Activated CD4-positive, alpha-beta T cell treated with anti-CD3 and anti-CD28 coated beads for 36 hours (primary cell): ENCODE measurements at regions of chr11 and their contacts with region 1.

Region 1: GRCh38 chr11:10770626-10771254 is 19.7 kb downstream of the CTR9 start:
- DNase-seq: peak; percentile 55
- ATAC-seq: no peak
- H3K4me3 Mint-ChIP-seq: no peak overlapping the region
- H3K27ac Mint-ChIP-seq: no peak overlapping the region
- H3K4me1 Mint-ChIP-seq: no peaks in the 10 kb centered on the region
- H3K27me3 Mint-ChIP-seq: no peaks in the 10 kb centered on the region

Region 2: GRCh38 chr11:11022125-11022730 is 251.5 kb after region 1 on chr11:
- CTCF ChIA-PET with region 1: interaction called, 6 read pairs
- POLR2A ChIA-PET with region 1: no interaction called
- intact Hi-C with region 1: loop called in 1 of 2 experiments (anchors 5 kb)
- DNase-seq: peak; percentile 27
- ATAC-seq: no peak
- H3K4me3 Mint-ChIP-seq: no peak overlapping the region
- H3K27ac Mint-ChIP-seq: no peak overlapping the region
- H3K4me1 Mint-ChIP-seq: no peaks in the 10 kb centered on the region
- H3K27me3 Mint-ChIP-seq: no peaks in the 10 kb centered on the region